Activated T-helper 1 cell treated with anti-CD3 and anti-CD28 coated beads, Interleukin-12 subunit alpha, Interleukin-12 subunit beta, Interleukin-2, Interleukin-4 antibody, amounts not matched to agents 30 ng/mL and 10 ng/mL and 1 ng/mL, durations not matched to agents 14 hours and 24 hours and 36 hours (primary cell): ENCODE measurements at regions of chr4 and their contacts with region 1.

Region 1: GRCh38 chr4:10116580-10117358 is at the start of gene WDR1:
- DNase-seq: peak; percentile 91
- H3K4me3 Mint-ChIP-seq: peak within 1 kb of the TSS; percentile 97
- H3K27ac Mint-ChIP-seq: peak within 1 kb of the TSS; percentile 95
- H3K4me1 Mint-ChIP-seq: peaks cover 86% of the 10 kb centered on the region
- H3K27me3 Mint-ChIP-seq: no peaks in the 10 kb centered on the region
- total RNA-seq, gene WDR1: 449 and 453 TPM in 2 replicates

Region 2: GRCh38 chr4:8198906-8199593 is 1917.7 kb before region 1 on chr4 and contains the start of gene SH3TC1:
- intact Hi-C with region 1: loop called (anchors 10 kb)
- DNase-seq: peak; percentile 65
- H3K4me3 Mint-ChIP-seq: peak within 1 kb of the TSS; percentile 89
- H3K27ac Mint-ChIP-seq: peak within 1 kb of the TSS; percentile 95
- H3K4me1 Mint-ChIP-seq: peaks cover 30% of the 10 kb centered on the region
- H3K27me3 Mint-ChIP-seq: peaks cover 1% of the 10 kb centered on the region
- total RNA-seq, gene SH3TC1: 25.4 and 33.6 TPM in 2 replicates

Region 3: DNA sequence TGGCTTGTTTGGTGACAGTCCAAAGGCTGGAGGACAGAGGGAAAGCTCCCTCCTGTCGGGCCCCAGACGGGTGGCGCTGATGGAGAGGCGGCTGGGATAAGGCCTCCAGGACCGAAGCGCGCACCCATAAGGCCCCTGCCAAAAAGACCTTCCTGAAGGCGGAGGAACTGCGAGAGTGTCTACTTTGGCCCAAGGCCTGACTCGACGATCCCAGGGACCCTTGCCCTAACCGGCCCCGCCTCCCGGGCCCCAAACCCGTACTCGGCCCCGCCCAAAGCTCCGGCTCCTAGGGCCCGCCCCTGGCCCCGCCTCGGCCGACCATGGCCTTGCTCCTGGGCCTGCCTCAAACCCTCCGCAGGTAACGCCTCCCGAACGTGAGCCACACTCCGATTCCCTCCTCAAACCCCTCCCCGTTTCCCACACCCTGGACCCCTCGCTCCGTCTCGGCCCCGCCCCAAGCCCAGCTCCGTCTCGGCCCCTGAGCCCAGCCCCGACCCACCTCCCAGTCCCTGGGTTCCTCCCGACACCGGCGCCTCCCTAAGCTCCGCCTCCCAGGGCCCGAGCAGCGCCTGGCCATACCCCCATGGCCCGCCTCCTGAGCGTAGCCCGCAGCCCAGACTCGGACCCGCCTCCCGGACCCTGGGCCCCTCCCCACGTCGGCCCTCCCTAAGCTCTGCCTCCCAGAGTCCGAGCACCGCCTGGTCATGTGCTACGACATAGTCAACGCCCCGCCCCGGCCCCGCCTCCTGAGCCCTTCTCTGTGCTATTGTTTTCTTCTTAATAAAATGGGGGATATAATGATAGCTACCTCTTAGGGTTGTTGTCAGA is 425.3 kb before region 1 on chr4:
- intact Hi-C with region 1: loop called (anchors 1 kb)
- DNase-seq: peak; percentile 85
- H3K4me3 Mint-ChIP-seq: peak overlapping the region; percentile 79
- H3K27ac Mint-ChIP-seq: no peak overlapping the region
- H3K4me1 Mint-ChIP-seq: peaks cover 16% of the 10 kb centered on the region
- H3K27me3 Mint-ChIP-seq: peaks cover 5% of the 10 kb centered on the region

Region 4: DNA sequence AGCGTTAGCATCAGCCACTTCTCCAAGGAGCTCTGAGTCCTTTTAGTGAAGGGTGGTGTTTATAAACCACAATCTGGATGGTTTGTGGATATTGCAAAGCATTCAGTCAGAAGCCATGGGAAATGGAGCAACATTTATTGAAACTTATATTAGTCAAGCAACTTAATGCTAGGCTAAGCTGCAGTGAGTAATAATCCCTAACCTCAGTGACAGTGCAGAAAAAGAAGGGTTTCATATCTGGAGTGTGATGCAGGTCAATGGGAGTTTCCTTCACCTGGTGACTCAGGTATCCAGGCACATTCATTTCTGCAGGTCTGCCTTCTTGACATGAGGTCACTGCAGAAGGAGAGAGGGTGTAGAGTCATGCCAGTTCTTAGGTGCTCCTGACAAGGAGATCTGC is 345.7 kb before region 1 on chr4:
- intact Hi-C with region 1: no loop called
- DNase-seq: no peak
- H3K4me3 Mint-ChIP-seq: no peak overlapping the region
- H3K27ac Mint-ChIP-seq: no peak overlapping the region
- H3K4me1 Mint-ChIP-seq: no peaks in the 10 kb centered on the region
- H3K27me3 Mint-ChIP-seq: peaks cover 36% of the 10 kb centered on the region

Region 5: DNA sequence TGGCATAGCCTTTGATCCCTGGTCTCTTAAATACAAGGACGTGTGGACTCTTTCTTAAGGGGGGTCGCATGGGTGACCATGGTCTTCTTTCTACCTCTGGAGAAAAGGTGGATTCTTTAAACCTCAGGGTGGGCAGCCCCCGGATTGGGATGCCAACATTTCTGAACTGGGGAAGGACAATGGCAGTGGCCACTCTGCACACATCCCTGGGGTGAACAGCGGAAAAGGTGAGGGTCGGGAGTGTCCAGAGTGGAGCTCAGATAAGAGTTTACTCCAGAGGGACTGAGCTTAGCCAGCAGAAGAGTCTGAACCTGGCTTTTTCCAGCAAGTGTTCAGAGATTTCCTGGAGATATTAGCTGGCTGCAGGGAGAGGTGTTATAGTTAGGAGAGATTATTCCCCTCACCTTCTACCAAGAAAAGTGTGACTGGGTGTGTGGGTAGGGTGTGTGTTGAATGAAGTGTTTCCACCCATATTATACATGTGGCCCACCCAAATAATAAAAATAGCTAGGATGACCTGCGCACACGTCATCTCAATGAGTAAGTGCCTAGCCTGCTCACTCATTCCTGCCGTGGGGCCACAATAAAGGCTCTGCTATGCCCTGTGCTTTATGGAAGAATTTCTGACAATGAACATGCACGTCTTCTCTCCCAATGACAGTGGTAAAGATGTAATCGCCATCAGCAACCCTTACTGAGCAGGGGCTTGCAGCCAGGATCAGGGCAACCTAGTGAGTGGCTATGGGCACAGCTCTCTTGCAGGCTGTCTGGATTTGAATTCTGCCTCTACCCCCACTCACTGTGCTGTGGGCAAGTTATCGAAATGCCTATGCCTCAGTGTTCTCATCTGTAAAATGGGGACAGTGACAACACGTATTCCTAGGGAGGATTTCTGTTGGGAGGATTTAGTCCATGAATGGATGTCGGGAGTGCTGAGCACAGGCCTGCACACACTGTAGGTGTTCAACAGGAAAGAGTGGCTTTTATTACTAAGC is 172.0 kb before region 1 on chr4:
- intact Hi-C with region 1: no loop called
- DNase-seq: no peak
- H3K4me3 Mint-ChIP-seq: no peak overlapping the region
- H3K27ac Mint-ChIP-seq: no peak overlapping the region
- H3K4me1 Mint-ChIP-seq: no peaks in the 10 kb centered on the region
- H3K27me3 Mint-ChIP-seq: no peaks in the 10 kb centered on the region

Region 6: DNA sequence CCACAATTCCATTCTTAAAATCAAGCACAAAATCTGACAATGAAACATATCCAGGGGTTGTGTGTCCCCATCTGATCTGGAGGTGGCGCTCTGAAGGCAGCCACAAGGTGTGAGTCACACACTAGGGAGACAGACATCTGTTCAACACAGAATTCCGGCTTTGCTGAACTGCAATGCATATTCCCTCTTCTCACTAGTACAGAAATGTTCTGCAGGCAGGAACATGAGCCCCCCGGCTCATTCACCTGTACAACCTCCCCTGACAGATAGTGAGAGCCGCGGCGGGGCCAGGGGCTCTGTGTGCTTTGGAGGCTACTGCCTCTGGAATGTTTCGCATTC is 42.0 kb before region 1 on chr4:
- intact Hi-C with region 1: no loop called
- DNase-seq: no peak
- H3K4me3 Mint-ChIP-seq: no peak overlapping the region
- H3K27ac Mint-ChIP-seq: no peak overlapping the region
- H3K4me1 Mint-ChIP-seq: no peaks in the 10 kb centered on the region
- H3K27me3 Mint-ChIP-seq: no peaks in the 10 kb centered on the region

Region 7: GRCh38 chr4:10096201-10096977 is 20.4 kb before region 1 on chr4:
- intact Hi-C with region 1: loop called (anchors 1 kb)
- DNase-seq: peak; percentile 72
- H3K4me3 Mint-ChIP-seq: peak overlapping the region; percentile 62
- H3K27ac Mint-ChIP-seq: peak overlapping the region; percentile 99
- H3K4me1 Mint-ChIP-seq: peaks cover 94% of the 10 kb centered on the region
- H3K27me3 Mint-ChIP-seq: no peaks in the 10 kb centered on the region

Region 8: DNA sequence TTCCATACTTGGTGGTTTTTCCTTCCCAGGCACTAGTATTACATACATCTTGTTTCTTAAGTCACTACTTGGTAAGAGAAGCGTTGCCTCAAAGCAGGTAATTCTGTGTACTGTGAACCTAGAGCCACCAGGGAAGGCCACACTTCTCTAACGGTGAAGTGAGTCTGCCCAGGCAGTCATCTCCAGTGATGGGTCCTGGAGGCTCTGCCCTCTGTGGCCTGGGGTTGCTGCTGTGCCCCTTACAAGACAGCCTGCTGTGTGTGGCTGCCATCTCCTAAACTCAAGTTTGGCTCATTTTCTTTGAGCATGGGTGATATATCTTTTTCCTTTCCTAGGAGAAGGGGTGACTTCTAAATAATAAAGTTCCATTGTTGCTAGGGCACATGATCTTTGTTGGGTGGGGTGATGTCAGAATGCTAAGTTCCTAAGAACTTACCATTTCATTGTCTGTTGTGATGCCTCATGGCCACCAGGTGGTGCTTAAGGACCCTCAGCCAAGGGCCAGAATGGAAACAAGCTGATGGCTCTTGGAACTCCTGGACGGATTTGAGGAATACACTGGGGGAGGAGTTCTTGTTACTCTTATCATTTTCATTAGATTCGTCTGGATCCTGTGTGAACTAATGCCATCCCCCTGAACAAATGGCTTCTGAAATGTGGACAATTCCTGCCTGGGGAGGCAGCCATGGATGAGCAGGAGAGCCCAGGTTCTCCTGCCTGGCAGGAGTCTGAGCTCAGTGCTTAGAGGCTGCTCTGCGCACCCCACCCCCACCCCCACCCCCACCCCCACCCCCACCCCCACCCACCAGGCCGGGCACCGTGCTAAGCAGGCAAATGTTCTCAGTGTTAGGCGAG is 40.9 kb after region 1 on chr4:
- intact Hi-C with region 1: loop called (anchors 1 kb)
- DNase-seq: peak; percentile 16
- H3K4me3 Mint-ChIP-seq: no peak overlapping the region
- H3K27ac Mint-ChIP-seq: no peak overlapping the region
- H3K4me1 Mint-ChIP-seq: peaks cover 43% of the 10 kb centered on the region
- H3K27me3 Mint-ChIP-seq: peaks cover 5% of the 10 kb centered on the region

Region 9: DNA sequence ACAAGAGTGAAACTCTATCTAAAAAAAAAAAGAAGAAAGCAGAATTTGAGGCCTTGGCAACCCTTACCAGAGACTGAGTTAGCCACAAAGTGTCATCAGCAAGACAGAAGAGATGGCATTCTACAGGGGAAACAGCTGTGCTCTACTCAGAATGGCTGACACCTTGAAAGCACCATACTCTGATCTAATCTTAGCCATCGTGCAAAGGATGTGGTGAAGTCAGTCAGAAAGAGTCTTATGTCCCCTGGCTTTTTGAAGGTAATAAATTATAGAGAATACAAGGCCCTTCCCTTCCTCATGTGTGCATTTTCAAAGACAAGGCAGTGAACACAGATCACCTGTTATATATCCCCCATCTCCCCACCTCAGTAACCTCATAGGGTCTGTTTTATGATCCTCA is 554.6 kb after region 1 on chr4:
- intact Hi-C with region 1: loop called (anchors 2 kb)
- DNase-seq: peak; percentile 42
- H3K4me3 Mint-ChIP-seq: peak overlapping the region; percentile 40
- H3K27ac Mint-ChIP-seq: peak overlapping the region; percentile 78
- H3K4me1 Mint-ChIP-seq: peaks cover 35% of the 10 kb centered on the region
- H3K27me3 Mint-ChIP-seq: no peaks in the 10 kb centered on the region